IMR-90 (cell line): ENCODE measurements at regions of chr7 and their contacts with region 1.

Region 1: DNA sequence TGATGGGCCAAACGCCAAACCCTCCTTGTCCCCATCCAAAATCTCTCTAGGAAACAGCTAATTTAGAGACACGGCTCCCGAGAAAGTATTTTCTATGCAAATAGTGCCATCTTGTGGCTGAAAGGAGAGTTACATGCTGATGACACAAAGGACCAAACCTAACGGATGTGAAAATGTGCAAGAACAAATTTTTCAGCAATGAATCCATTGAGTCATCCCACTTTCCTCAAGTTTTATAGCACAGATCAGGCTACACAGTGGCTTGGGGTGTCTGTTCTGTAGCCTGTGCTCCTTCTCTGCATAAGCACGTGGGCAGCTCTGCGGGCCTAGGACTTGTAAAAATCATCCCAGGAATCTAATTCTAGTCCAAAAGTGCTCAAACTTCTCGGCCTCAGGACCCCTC is 154.8 kb upstream of the PRR15 start:
- DNase-seq: peak; percentile 63
- ATAC-seq: peak; percentile 87
- H3K4me3 ChIP-seq: no peak overlapping the region
- H3K27ac ChIP-seq: no peak overlapping the region
- H3K4me1 ChIP-seq: no peaks in the 10 kb centered on the region
- H3K27me3 ChIP-seq: peaks cover 1% of the 10 kb centered on the region; the same call in 1 of the 2 replicates
- CTCF ChIP-seq: peak; percentile 80
- POLR2A ChIP-seq: no peak
- RAD21 ChIP-seq: peak; percentile 76

Region 2: GRCh38 chr7:28389504-28390395 is 1019.1 kb before region 1 on chr7:
- CTCF ChIA-PET with region 1: no interaction called
- POLR2A ChIA-PET with region 1: no interaction called
- dilution Hi-C with region 1: no loop called
- in situ Hi-C with region 1: no loop called
- intact Hi-C with region 1: loop called (anchors 10 kb)
- DNase-seq: peak; percentile 79
- ATAC-seq: peak; percentile 75
- H3K4me3 ChIP-seq: peak overlapping the region; percentile 34; the same call in 1 of the 2 replicates
- H3K27ac ChIP-seq: no peak overlapping the region
- H3K4me1 ChIP-seq: 0 out of 2 replicates have a peak, but pooled peaks cover 2% of the 10 kb centered on the region
- H3K27me3 ChIP-seq: peaks cover 7% of the 10 kb centered on the region; the same call in 1 of the 2 replicates
- CTCF ChIP-seq: peak; percentile 80
- POLR2A ChIP-seq: no peak
- RAD21 ChIP-seq: peak; percentile 80

Region 3: DNA sequence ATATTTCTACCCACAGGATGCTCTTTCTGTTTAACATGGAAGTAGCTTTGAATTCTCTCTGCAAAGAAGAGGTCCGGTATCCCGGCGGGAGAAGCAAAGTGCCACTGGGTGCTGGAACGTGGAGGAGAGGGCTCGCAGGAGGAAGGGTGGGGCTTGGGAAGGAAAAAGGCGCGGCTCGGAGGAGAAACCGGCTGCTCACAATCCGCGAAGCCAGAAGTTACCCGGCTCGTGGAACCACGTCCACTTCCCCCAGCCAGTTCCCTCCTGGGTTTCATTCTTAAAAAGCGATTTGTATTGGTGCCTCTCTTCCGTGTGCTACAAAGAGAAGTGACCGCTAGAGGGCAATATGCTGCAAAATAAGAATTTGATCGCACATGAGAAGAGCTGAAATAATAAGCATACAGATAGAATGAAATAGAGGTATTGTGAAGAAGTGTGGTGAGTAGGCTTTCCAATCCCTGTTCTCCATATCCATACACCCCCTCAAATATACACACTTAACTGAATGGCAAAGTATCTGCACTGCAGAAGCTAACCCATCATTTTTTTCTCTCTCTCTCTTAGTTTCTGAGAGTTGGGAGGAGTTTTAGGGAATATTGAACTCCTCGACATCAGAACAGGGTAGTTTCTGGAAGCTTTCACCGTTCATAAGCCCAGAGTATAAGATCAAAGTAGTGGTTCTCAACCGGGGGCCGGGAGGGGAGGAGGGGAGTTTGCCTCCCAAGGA is 481.8 kb before region 1 on chr7:
- CTCF ChIA-PET with region 1: interaction called, 30 read pairs
- POLR2A ChIA-PET with region 1: no interaction called
- dilution Hi-C with region 1: no loop called
- in situ Hi-C with region 1: loop called (anchors 5 kb)
- intact Hi-C with region 1: loop called (anchors 1 kb)
- DNase-seq: peak; percentile 86
- ATAC-seq: peak; percentile 91
- H3K4me3 ChIP-seq: peak overlapping the region; percentile 48
- H3K27ac ChIP-seq: no peak overlapping the region
- H3K4me1 ChIP-seq: no peaks in the 10 kb centered on the region
- H3K27me3 ChIP-seq: peaks cover 14% of the 10 kb centered on the region
- CTCF ChIP-seq: peak; percentile 86
- POLR2A ChIP-seq: no peak
- RAD21 ChIP-seq: peak; percentile 76

Region 4: DNA sequence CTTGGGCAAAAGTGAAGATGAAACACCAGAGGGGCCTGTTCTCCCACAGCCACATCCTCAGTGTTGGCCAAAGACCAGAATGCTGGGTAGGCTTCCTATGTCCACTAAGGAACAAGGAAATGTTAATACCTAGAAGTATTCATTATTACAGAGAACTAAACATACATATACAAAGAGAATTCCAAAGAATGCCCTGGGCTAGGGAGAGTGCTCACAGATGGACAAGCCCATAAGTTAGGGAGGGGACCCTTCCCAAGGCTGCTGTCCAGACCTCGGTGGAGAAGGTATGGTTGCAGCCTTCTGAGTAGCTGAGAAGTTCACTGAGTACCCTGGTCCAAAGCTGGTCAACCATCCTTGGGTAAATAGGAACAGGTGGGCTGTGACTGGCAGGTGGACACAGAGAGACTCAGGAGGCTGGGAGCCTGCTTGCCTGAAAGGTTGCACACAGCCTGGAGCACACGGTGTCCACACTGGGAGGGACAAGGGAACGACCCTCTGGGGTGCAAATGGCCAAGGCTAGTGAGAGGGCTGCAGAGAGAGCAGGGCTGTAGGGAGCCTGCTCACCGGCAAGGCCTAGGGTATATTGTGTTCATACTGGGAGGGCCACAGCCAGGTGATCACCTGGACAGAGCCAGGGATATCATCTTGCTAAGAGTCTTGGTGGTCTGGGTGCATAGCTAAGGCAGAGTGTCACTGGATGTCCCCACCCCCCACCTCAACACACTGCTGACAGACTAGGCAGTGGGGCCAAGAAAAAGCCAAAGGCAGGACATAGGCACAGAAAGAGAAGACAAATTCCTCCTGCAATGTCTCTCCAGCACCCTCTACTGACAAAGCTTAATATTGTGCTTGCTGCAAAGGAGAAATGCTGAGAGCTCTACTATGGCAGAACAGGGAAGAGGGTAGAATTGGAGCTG is 302.8 kb before region 1 on chr7:
- CTCF ChIA-PET with region 1: interaction called, 7 read pairs
- POLR2A ChIA-PET with region 1: no interaction called
- dilution Hi-C with region 1: no loop called
- in situ Hi-C with region 1: loop called (anchors 10 kb)
- intact Hi-C with region 1: loop called (anchors 2 kb)
- DNase-seq: peak; percentile 60
- ATAC-seq: peak; percentile 97
- H3K4me3 ChIP-seq: no peak overlapping the region
- H3K27ac ChIP-seq: no peak overlapping the region
- H3K4me1 ChIP-seq: no peaks in the 10 kb centered on the region
- H3K27me3 ChIP-seq: peaks cover 7% of the 10 kb centered on the region
- CTCF ChIP-seq: peak; percentile 87
- POLR2A ChIP-seq: no peak
- RAD21 ChIP-seq: peak; percentile 79

Region 5: DNA sequence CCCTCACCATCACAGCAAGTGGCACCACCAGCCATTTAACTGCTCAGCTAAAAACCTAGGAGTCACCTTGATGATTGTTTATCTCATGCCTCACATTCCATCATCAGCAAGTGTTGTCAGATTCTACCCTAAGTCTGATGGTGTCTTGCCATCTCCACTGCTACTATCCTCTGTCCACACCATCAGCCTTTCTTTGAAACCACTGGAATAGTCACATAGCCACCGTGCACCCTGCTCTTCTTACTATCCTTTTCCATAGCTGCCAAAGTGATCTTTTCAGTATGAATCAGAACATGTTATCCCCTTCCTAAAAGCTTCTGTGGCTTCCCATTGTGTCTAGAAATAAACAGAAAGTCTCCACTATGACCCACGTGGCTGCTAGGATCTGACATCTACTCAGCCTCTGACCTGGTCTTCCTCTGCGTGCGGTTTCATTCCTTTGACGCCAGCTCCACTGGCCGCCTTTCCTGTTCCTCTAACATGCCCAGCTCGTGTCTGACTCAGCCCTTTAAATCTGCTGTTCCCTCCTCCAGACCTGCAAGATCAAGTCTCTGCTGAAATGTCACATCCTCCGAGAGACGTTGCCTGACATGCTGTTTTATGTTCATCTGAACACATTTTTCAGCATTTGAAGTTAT is 230.8 kb before region 1 on chr7:
- CTCF ChIA-PET with region 1: no interaction called
- POLR2A ChIA-PET with region 1: no interaction called
- dilution Hi-C with region 1: no loop called
- in situ Hi-C with region 1: no loop called
- intact Hi-C with region 1: no loop called
- DNase-seq: no peak
- ATAC-seq: no peak
- H3K4me3 ChIP-seq: no peak overlapping the region
- H3K27ac ChIP-seq: no peak overlapping the region
- H3K4me1 ChIP-seq: no peaks in the 10 kb centered on the region
- H3K27me3 ChIP-seq: no peaks in the 10 kb centered on the region
- CTCF ChIP-seq: no peak
- POLR2A ChIP-seq: no peak
- RAD21 ChIP-seq: no peak

Region 6: DNA sequence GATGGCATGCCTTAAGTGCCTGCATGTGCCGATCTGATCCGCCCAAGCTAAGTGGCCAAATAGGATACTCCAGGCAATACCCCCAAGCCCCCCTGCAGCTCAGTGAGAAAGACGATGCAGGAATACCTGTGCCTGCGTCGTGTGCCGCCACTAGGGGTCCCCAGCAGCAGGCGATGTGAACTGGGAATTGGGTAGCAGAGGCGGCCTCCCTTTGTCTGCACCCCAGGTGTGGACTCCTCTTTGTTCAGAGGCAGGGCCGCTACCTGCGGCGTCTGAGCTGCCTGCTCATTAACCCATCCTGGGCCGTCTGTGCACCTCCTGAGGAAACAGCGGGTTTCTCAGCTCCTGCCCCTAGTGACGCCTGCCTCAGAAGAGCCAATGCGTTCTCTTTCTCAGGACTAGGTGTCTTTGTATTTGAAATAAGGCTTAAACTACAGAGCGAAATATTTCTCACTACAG is 219.1 kb before region 1 on chr7:
- CTCF ChIA-PET with region 1: interaction called, 4 read pairs
- POLR2A ChIA-PET with region 1: no interaction called
- dilution Hi-C with region 1: no loop called
- in situ Hi-C with region 1: no loop called
- intact Hi-C with region 1: loop called (anchors 1 kb)
- DNase-seq: no peak
- ATAC-seq: peak; percentile 69; the same call in 1 of the 2 replicates
- H3K4me3 ChIP-seq: no peak overlapping the region
- H3K27ac ChIP-seq: no peak overlapping the region
- H3K4me1 ChIP-seq: no peaks in the 10 kb centered on the region
- H3K27me3 ChIP-seq: peaks cover 19% of the 10 kb centered on the region
- CTCF ChIP-seq: peak; percentile 43
- POLR2A ChIP-seq: no peak
- RAD21 ChIP-seq: no peak